MCF 10A (cell line): ENCODE measurements at regions of chr9 and their contacts with region 1.

Region 1: GRCh38 chr9:133992780-133993634 is 883 bp upstream of the VAV2 start:
- DNase-seq: peak; percentile 89
- H3K4me3 Mint-ChIP-seq: peak overlapping the region; percentile 85
- H3K27ac Mint-ChIP-seq: no peak overlapping the region
- H3K4me1 Mint-ChIP-seq: no peaks in the 10 kb centered on the region
- H3K27me3 Mint-ChIP-seq: no peaks in the 10 kb centered on the region
- CTCF ChIP-seq: peak; percentile 28

Region 2: DNA sequence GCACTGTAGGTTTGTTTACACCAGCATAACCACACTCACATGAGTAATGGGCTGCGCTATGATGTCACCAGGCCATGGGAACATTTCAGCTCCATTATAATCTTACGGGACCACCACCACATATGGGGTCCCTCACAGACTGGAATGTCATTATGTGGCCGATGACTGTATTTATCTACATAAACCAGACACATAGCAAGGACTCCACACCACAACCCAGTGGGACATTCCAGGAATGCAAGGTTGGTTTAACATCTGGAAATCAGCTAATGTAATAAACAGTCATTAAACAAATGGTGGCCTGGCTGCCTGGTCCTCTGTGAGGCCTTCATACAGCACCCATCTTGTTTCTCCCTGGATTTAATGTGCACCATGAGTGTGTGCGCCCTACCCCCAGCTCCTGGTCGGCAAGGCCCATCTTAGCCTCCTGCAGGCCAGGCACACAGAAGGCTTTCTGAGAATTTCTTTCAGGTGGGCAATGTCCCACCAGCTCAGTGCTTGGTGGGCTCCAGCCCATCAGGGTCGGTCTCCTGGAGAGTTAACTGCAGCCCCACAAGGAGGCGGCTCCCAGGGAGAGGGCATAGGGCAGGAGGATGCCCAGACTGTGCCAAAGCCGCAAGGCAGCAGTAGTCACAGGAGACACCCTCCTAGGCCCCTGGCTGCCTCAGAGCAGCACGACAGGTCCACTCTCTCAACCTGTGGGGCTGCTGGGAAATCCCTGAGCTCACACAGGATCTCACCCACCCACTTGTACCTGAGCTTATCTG is 218.9 kb before region 1 on chr9:
- CTCF ChIA-PET with region 1: interaction called, 136 read pairs
- POLR2A ChIA-PET with region 1: interaction called, 3 read pairs
- intact Hi-C with region 1: no loop called
- DNase-seq: no peak
- H3K4me3 Mint-ChIP-seq: no peak overlapping the region
- H3K27ac Mint-ChIP-seq: no peak overlapping the region
- H3K4me1 Mint-ChIP-seq: no peaks in the 10 kb centered on the region
- H3K27me3 Mint-ChIP-seq: no peaks in the 10 kb centered on the region
- CTCF ChIP-seq: no peak

Region 3: DNA sequence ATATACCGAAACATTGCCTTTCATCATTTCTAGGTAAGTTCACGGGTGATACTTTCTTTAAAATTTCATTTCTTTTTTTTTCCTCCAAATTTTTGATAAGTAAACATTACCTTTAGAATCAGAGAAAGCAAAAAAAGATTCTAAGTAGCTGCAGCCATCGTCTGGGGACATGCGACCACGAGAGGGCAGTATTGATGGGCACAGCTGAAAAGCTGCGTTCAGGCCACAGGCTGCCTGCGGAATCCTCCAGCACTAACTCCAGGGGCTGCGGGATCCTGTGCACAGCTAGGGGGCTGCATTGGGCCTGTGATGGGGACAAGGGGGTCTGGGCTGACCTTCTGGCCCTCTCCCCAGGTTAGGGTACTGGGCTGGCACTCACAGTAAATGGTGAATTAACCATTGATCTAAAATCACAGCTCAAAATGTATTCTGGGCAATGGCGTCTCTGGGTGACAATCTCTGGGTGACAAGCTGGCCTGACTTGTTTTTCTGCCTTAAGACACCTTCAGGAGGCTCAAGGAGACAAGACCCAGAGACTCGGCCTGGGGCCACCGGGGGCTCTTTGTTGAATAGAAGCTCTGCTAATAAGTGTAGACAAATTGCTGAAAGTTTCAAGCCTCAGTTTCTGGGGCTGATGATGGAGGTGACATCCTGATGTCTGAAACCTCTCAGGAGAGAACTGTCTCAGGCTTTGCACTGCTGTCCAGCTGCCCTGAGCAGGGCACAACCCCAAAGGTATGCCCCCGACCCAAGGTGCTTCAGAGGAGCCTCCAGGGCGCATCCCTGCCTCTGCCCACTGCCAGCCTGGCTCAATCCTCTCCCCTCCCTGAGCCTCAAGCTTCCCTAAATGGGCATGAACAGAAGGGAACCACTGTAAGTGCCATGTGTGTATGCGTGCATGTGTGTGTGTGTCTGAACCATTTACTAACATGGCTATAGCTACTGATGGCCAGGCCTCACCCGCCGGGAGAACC is 210.6 kb before region 1 on chr9:
- CTCF ChIA-PET with region 1: interaction called, 136 read pairs
- POLR2A ChIA-PET with region 1: interaction called, 16 read pairs
- intact Hi-C with region 1: loop called (anchors 1 kb)
- DNase-seq: peak; percentile 55
- H3K4me3 Mint-ChIP-seq: no peak overlapping the region
- H3K27ac Mint-ChIP-seq: no peak overlapping the region
- H3K4me1 Mint-ChIP-seq: no peaks in the 10 kb centered on the region
- H3K27me3 Mint-ChIP-seq: no peaks in the 10 kb centered on the region
- CTCF ChIP-seq: peak; percentile 64

Region 4: GRCh38 chr9:133792721-133793470 is 200.1 kb before region 1 on chr9:
- CTCF ChIA-PET with region 1: interaction called, 90 read pairs
- POLR2A ChIA-PET with region 1: interaction called, 5 read pairs
- intact Hi-C with region 1: loop called (anchors 1 kb)
- DNase-seq: peak; percentile 68
- H3K4me3 Mint-ChIP-seq: no peak overlapping the region
- H3K27ac Mint-ChIP-seq: no peak overlapping the region
- H3K4me1 Mint-ChIP-seq: peaks cover 11% of the 10 kb centered on the region
- H3K27me3 Mint-ChIP-seq: no peaks in the 10 kb centered on the region
- CTCF ChIP-seq: peak; percentile 90

Region 5: DNA sequence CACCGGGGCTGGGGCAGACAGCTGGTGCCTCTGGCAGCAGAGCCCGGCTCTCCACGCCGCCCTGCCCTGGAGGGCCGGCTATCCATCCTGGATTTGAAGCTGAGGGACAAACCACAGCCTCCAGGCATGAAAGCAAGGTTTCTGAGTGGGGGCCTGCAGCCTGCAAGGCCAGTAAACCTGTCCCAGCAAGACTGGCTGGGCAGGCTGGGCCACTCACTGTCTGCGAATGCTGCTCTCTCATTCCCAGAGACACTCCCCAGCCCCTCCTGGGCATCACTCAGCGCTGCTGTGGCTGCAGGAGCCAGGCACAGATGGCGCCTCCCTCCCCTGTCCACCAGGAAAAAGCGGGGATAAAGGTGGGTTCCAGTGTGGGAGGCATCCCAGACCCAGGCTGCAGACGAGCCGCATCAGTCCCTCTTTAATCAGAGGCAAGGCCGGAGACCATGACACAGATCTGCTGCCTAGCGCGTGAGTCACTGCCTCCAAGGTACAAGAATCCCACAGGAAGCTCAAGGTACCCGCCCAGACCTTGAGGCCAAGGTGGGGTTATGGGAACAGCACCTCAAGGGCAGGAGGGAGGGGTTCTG is 118.9 kb before region 1 on chr9:
- CTCF ChIA-PET with region 1: interaction called, 13 read pairs
- POLR2A ChIA-PET with region 1: interaction called, 15 read pairs
- intact Hi-C with region 1: loop called (anchors 1 kb)
- DNase-seq: peak; percentile 92
- H3K4me3 Mint-ChIP-seq: peak overlapping the region; percentile 45
- H3K27ac Mint-ChIP-seq: peak overlapping the region; percentile 87
- H3K4me1 Mint-ChIP-seq: peaks cover 39% of the 10 kb centered on the region
- H3K27me3 Mint-ChIP-seq: no peaks in the 10 kb centered on the region
- CTCF ChIP-seq: no peak

Region 6: GRCh38 chr9:133945314-133945975 is 47.6 kb before region 1 on chr9:
- CTCF ChIA-PET with region 1: interaction called, 24 read pairs
- POLR2A ChIA-PET with region 1: interaction called, 7 read pairs
- intact Hi-C with region 1: loop called (anchors 1 kb)
- DNase-seq: no peak
- H3K4me3 Mint-ChIP-seq: no peak overlapping the region
- H3K27ac Mint-ChIP-seq: peak overlapping the region; percentile 83
- H3K4me1 Mint-ChIP-seq: peaks cover 6% of the 10 kb centered on the region
- H3K27me3 Mint-ChIP-seq: no peaks in the 10 kb centered on the region
- CTCF ChIP-seq: no peak

Region 7: GRCh38 chr9:134099123-134099787 is 106.2 kb after region 1 on chr9:
- CTCF ChIA-PET with region 1: interaction called, 6 read pairs
- POLR2A ChIA-PET with region 1: no interaction called
- intact Hi-C with region 1: loop called (anchors 1 kb)
- DNase-seq: peak; percentile 68
- H3K4me3 Mint-ChIP-seq: no peak overlapping the region
- H3K27ac Mint-ChIP-seq: no peak overlapping the region
- H3K4me1 Mint-ChIP-seq: peaks cover 5% of the 10 kb centered on the region
- H3K27me3 Mint-ChIP-seq: peaks cover 34% of the 10 kb centered on the region
- CTCF ChIP-seq: peak; percentile 83